CD8-positive, alpha-beta T cell (primary cell): ENCODE measurements at regions of chr5 and their contacts with region 1.

Region 1: DNA sequence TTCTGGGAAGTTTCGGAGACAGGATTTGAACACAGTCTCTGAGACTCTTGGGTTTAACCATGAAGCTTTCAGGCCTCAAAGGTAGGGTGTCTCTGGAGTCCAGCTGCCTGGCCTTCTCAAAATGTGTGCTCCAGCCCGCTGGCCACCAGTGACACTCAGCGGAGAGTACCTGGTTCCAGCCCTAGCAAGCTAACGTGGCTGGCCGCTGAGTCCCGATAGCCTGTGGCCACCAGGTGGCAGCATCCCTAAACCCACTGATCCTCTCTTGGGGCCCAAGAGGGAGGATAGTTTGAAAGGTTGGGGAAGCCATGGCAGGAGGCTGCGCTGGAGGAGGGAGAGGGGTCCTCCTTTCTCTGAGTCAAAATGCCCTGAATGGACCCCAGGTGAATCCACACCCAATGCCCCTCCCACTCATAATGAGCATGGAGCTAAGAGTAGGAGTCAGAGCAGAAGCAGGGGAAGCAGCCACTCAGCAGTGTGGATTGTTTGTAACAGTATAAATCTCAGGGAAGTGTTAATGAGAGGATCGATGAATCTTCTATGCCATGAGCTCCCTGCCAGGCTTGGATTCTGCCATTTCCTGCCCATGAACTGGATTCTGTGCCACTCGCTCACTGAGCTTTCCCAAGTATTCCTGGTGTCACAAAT is 5.4 kb upstream of the TIFAB start:
- DNase-seq: peak; percentile 25 to 62 (median 51)
- ATAC-seq: peak; percentile 53
- H3K4me3 ChIP-seq: no peak overlapping the region
- H3K4me3 Mint-ChIP-seq: no peak overlapping the region
- H3K27ac ChIP-seq: no peak overlapping the region
- H3K27ac Mint-ChIP-seq: no peak overlapping the region
- H3K4me1 ChIP-seq: no peaks in the 10 kb centered on the region
- H3K4me1 Mint-ChIP-seq: peaks cover 2% of the 10 kb centered on the region
- H3K27me3 ChIP-seq: no peaks in the 10 kb centered on the region
- H3K27me3 Mint-ChIP-seq: peaks cover 17% of the 10 kb centered on the region
- CTCF ChIP-seq: peak; percentile 78

Region 2: DNA sequence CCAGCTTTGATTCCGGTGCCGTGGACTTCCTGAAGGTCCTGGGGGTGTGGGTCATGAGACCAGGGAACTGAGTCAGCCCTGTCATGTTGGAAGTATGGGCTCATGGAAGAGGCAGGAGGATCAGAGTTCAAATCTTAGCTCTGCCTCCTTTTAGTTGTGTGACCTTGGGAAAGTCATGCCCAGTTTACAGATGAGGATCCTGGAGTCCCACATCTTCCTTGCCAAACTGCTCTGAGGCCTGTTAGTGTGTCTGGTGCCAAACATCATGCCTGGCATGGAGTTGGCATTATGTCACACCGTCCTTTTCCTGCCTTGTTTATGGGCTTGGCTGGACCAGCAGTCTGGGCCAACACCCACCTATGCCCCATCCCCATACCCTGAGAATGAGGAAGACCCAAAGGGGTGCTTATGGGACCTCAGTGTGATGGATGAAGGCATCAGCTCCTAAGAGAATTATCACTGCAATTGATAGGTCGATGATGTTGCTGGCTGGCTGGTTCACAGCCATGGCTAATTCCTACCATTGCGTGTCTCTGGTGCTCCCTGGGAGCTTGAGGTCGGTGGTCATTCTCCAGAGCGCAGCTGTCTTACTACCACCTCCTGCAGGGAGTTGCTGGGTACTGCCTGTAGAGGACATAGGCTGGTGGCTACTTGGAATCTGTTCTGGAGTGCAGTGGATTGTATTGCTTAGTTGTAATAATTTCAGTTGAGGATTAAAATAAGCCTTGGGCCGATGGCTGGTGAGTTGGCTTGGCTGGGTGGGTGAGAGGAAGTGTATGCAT is 283.0 kb before region 1 on chr5:
- CTCF ChIA-PET with region 1: no interaction called
- POLR2A ChIA-PET with region 1: no interaction called
- intact Hi-C with region 1: no loop called
- DNase-seq: no peak
- ATAC-seq: no peak
- H3K4me3 ChIP-seq: no peak overlapping the region
- H3K4me3 Mint-ChIP-seq: no peak overlapping the region
- H3K27ac ChIP-seq: no peak overlapping the region
- H3K27ac Mint-ChIP-seq: no peak overlapping the region
- H3K4me1 ChIP-seq: no peaks in the 10 kb centered on the region
- H3K4me1 Mint-ChIP-seq: no peaks in the 10 kb centered on the region
- H3K27me3 ChIP-seq: no peaks in the 10 kb centered on the region
- H3K27me3 Mint-ChIP-seq: peaks cover 26% of the 10 kb centered on the region
- CTCF ChIP-seq: no peak

Region 3: DNA sequence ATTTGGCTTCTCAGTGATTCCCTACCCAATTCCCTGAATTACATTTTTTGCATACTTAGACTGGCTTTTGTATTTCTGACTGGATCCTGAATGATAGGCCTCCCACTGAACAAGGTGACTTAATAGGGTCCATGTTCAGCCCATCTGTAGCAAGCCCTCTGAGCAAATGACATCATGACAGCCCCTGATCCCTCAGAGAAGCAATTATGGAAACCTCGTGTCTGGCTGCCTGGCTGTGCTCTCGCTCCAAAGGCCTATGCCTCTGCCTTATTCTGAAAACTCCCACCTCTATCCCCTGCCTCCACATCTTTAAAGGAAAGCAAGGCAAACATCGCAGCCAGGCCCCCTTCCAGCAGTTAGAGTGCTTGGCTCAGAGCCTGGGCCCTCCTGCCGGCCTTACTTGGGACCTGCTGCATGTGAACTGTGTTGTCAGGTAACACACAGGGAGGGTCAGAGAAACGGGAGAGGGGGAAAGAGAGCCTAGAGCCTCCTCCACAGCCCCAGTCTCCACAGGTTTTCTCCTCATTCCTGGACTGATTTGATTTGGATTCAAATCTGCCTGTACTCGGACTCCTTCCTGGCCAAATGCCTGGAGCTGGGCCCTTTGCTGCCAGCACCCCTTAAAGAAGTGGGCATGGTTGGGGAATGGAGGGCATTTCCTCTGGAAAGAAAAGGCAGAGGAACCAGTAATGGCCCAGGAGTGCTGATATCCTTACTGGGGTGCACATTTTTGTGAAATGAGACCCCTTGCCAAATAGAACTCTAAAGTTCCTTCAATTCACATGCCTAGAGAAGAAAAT is 14.2 kb before region 1 on chr5:
- CTCF ChIA-PET with region 1: interaction called, 49 read pairs
- POLR2A ChIA-PET with region 1: interaction called, 3 read pairs
- intact Hi-C with region 1: no loop called
- DNase-seq: peak in 2 of 9 experiments; percentile 2 to 39
- ATAC-seq: no peak
- H3K4me3 ChIP-seq: no peak overlapping the region
- H3K4me3 Mint-ChIP-seq: no peak overlapping the region
- H3K27ac ChIP-seq: no peak overlapping the region
- H3K27ac Mint-ChIP-seq: no peak overlapping the region
- H3K4me1 ChIP-seq: no peaks in the 10 kb centered on the region
- H3K4me1 Mint-ChIP-seq: no peaks in the 10 kb centered on the region
- H3K27me3 ChIP-seq: no peaks in the 10 kb centered on the region
- H3K27me3 Mint-ChIP-seq: peaks cover 3% of the 10 kb centered on the region
- CTCF ChIP-seq: no peak

Region 4: GRCh38 chr5:135551593-135552447 is 94.3 kb after region 1 on chr5:
- CTCF ChIA-PET with region 1: interaction called, 89 read pairs
- POLR2A ChIA-PET with region 1: no interaction called
- intact Hi-C with region 1: no loop called
- DNase-seq: peak; percentile 8 to 61 (median 40)
- ATAC-seq: peak; percentile 51
- H3K4me3 ChIP-seq: no peak overlapping the region
- H3K4me3 Mint-ChIP-seq: no peak overlapping the region
- H3K27ac ChIP-seq: no peak overlapping the region
- H3K27ac Mint-ChIP-seq: no peak overlapping the region
- H3K4me1 ChIP-seq: no peaks in the 10 kb centered on the region
- H3K4me1 Mint-ChIP-seq: no peaks in the 10 kb centered on the region
- H3K27me3 ChIP-seq: no peaks in the 10 kb centered on the region
- H3K27me3 Mint-ChIP-seq: peaks cover 67% of the 10 kb centered on the region
- CTCF ChIP-seq: peak; percentile 65